Mammary epithelial cell (primary cell): ENCODE measurements at regions of chr7 and their contacts with region 1.

Region 1: DNA sequence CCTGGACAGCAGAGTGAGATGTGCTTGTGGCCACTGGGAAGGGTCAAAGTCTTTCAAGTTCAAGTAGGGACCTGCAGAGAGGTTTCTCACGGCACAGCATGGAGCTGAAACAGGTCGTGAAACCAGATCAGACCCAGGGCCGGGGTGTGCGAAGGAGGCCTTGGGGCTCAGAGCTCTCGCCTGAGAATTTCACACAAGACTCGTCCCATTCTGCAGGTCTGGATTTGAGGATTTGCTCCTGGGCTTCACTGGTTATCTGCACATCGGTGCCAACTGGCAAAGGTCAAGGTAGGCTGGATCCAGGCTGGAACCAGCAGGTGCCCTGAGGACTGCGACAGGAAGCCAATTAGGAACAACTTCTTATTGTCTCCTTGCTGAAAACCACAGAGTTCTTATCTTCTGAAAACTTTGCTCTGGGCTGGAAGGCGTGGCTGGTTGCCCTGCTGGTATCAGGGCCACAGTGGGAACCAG is 24.0 kb upstream of the GTF2I start:
- DNase-seq: no peak
- H3K4me3 ChIP-seq: no peak overlapping the region
- H3K27ac ChIP-seq: no peak overlapping the region
- H3K4me1 ChIP-seq: peaks cover 24% of the 10 kb centered on the region
- H3K27me3 ChIP-seq: no peaks in the 10 kb centered on the region
- CTCF ChIP-seq: no peak

Region 2: DNA sequence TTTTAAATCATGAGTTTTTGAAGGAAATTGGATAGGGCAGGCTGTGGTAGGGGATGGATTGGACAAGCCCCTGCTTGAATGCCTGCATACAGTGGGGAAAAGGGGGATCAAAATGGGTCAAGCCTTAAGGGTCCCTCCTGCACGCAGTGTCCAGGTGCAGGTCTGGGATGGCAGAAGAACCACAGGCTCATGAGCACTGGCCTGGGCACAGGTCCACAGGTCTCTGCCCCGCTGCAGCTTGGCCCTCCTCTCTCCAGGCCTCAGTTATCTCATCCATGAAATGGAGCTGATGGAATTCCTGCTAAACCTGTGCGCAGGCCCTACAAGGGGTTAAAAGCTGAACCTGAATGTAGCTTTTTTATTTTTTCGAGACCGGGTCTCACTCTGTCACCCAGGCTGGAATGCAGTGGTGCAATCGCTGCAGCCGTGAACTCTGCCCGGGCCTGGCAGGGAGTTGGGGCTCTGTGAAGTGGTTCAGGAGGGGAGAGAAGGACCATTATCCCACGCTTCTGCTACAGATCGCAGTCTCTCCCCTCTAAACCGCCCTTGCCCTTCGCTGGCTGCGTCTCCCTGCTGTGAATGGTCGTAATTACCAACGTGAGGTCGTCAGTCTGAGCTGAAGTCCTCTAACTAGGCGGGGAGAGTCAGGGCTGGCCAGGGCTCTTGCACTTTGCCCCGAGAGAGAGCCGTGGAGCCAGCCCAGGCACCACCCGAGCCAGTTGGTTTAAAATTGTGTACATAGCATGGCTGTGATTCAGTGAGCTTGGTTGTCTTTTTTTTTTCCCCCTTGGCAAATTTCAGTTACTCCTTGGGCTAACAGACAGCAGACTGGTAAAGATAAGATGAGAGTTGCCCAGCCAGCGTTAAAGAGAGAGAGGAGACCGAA is 53.4 kb before region 1 on chr7:
- CTCF ChIA-PET with region 1: no interaction called
- dilution Hi-C with region 1: loop called (anchors 5 kb)
- in situ Hi-C with region 1: no loop called
- intact Hi-C with region 1: no loop called
- DNase-seq: peak; percentile 45
- H3K4me3 ChIP-seq: no peak overlapping the region
- H3K27ac ChIP-seq: no peak overlapping the region
- H3K4me1 ChIP-seq: peaks cover 49% of the 10 kb centered on the region
- H3K27me3 ChIP-seq: no peaks in the 10 kb centered on the region
- CTCF ChIP-seq: no peak

Region 3: GRCh38 chr7:74598558-74598957 is 34.9 kb before region 1 on chr7:
- CTCF ChIA-PET with region 1: no interaction called
- dilution Hi-C with region 1: no loop called
- in situ Hi-C with region 1: no loop called
- intact Hi-C with region 1: loop called (anchors 5 kb)
- DNase-seq: peak; percentile 76
- H3K4me3 ChIP-seq: no peak overlapping the region
- H3K27ac ChIP-seq: no peak overlapping the region
- H3K4me1 ChIP-seq: peaks cover 2% of the 10 kb centered on the region
- H3K27me3 ChIP-seq: no peaks in the 10 kb centered on the region
- CTCF ChIP-seq: no peak

Region 4: GRCh38 chr7:75038553-75038952 is 405.1 kb after region 1 on chr7:
- CTCF ChIA-PET with region 1: no interaction called
- dilution Hi-C with region 1: no loop called
- in situ Hi-C with region 1: no loop called
- intact Hi-C with region 1: loop called (anchors 5 kb)
- DNase-seq: no peak
- H3K4me3 ChIP-seq: no peak overlapping the region
- H3K27ac ChIP-seq: peak overlapping the region; percentile 33
- H3K4me1 ChIP-seq: peaks cover 21% of the 10 kb centered on the region
- H3K27me3 ChIP-seq: no peaks in the 10 kb centered on the region
- CTCF ChIP-seq: peak in 1 of 2 donors; percentile 12